ENCODE measurements at regions of chr18 and their contacts with region 1.

Region 1: DNA sequence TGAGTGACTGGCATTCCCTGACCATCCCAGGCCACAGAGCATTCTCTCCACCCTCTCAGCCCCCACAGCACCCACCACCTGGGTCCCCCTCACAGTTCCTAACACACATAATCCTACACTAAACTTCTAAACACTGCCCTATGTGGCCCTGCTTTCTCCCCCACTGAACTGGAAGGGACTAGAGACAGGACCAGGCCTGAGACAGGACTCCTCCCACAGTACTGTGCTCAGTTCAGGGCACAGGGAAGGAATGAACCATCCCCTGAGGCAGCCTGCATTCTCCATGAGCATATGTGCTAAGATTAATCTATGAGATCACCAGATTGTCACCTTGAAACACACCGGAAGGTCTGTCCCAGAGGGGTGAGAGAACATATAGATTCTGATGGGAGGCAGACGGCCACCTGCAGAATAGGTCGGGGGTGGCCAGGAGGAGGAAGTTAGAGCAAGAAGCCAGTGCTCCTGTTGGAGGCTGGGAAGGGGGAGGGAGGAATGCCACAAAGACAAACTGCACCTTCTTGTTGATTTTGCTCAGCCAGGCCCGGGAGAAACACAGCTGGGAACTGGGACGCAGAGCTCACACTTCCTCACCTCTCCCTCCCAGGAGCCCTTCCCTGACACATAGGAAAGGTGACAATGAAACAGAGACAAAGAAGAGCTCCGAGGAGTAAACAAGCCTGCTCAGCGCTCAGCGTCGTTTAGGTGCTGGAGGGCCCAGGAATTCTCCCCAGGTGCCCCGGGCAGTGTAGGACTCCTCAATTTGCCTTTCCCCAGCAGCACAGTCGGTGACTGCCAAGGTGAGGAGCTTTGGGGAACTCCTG is 52.2 kb downstream of the ZBTB7C start:
- DNase-seq: peak in 3 of 7 donors; percentile 12 to 39 (median 16)
- H3K4me3 ChIP-seq: no peak overlapping the region
- H3K27ac ChIP-seq: peak overlapping the region in 1 of 5 donors; percentile 21
- H3K4me1 ChIP-seq: peaks cover 5 to 11% of the 10 kb centered on the region in 2 donors
- H3K27me3 ChIP-seq: no peaks in the 10 kb centered on the region
- CTCF ChIP-seq: no peak
- POLR2A ChIP-seq: no peak

Region 2: DNA sequence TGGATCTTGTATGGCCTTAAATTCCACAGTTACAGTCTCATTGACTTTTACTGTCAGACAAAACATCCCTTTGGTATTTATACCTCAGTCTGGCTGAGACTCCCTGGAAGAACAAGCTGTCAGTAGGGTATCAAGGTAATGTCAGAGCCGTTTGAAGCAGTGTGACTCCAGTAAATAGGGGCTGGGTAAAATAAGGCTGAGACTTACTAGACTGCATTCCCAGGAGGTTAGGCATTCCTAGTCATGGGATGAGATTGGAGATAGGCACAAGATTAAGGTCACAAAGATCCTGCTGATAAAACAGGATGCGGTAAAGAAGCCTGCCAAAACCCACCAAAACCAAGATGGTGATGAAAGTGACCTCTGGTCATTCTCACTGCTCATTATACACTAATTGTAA is 886.1 kb before region 1 on chr18:
- intact Hi-C with region 1: loop called in 1 of 2 experiments (anchors 10 kb)
- DNase-seq: no peak
- H3K4me3 ChIP-seq: no peak overlapping the region
- H3K27ac ChIP-seq: no peak overlapping the region
- H3K4me1 ChIP-seq: no peaks in the 10 kb centered on the region
- H3K27me3 ChIP-seq: no peaks in the 10 kb centered on the region
- CTCF ChIP-seq: no peak
- POLR2A ChIP-seq: no peak

Measured in adrenal gland (tissue), 19 donors.